H1 (cell line): ENCODE measurements at regions of chr5 and their contacts with region 1.

Region 1: GRCh38 chr5:140564196-140565023 is at the starts of genes APBB3 and SLC35A4:
- DNase-seq: peak; percentile 84 to 89
- H3K4me3 ChIP-seq: peak within 1 kb of the TSS; percentile 90 to 99 (median 95)
- H3K27ac ChIP-seq: peak within 1 kb of the TSS; percentile 65
- H3K4me1 ChIP-seq: peaks cover 0 to 11% (median 4%) of the 10 kb centered on the region in 4 experiments; a peak in 5 of 7 replicates
- H3K27me3 ChIP-seq: no peaks in the 10 kb centered on the region; a peak in 1 of 7 replicates
- CTCF ChIP-seq: no peak
- EP300 ChIP-seq: no peak
- POLR2A ChIP-seq: peak in 1 of 2 experiments; percentile 48; a peak in 2 of 3 replicates
- RAD21 ChIP-seq: peak in 1 of 2 experiments; percentile 7; a peak in 1 of 4 replicates
- total RNA-seq, gene APBB3: 12.0 and 16.0 TPM in 2 replicates
- total RNA-seq, gene SLC35A4: 78.6 and 81.9 TPM in 2 replicates

Region 2: GRCh38 chr5:140547508-140548299 is 16.7 kb before region 1 on chr5 and contains the start of gene EIF4EBP3:
- CTCF ChIA-PET with region 1: interaction called, 19 read pairs
- POLR2A ChIA-PET with region 1: interaction called, 191 read pairs
- DNase-seq: peak; percentile 91 to 95
- H3K4me3 ChIP-seq: peak within 1 kb of the TSS; percentile 34 to 66 (median 44)
- H3K27ac ChIP-seq: peak within 1 kb of the TSS; percentile 73
- H3K4me1 ChIP-seq: peaks cover 0 to 18% (median 6%) of the 10 kb centered on the region in 4 experiments; a peak in 4 of 7 replicates
- H3K27me3 ChIP-seq: no peaks in the 10 kb centered on the region
- CTCF ChIP-seq: peak; percentile 40 to 73 (median 61)
- EP300 ChIP-seq: no peak
- POLR2A ChIP-seq: peak; percentile 72 to 83
- RAD21 ChIP-seq: peak; percentile 35 to 43
- total RNA-seq, gene EIF4EBP3: 8.9 and 11.7 TPM in 2 replicates

Region 3: DNA sequence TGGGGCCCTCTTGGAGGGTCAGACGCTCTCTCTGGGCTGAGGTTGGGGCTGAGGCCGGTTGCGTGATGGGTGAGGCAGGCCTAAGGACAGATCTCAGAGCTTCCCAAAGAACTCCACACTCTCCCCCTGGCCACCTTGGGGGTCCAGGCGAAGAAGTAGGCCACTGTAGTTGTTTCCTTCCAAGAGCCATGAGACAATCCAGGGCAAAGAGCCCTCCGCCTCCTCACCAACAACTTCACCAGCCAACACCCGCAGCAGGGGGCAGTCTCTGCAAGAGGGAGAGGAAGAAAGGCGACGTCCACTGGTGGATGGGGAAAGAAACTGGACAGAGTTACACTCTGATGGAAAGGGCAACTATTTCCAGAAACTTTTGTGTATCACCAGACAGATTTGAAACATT is 10.9 kb after region 1 on chr5:
- CTCF ChIA-PET with region 1: interaction called, 20 read pairs
- POLR2A ChIA-PET with region 1: interaction called, 3 read pairs
- DNase-seq: no peak
- H3K4me3 ChIP-seq: no peak overlapping the region
- H3K27ac ChIP-seq: no peak overlapping the region
- H3K4me1 ChIP-seq: no peaks in the 10 kb centered on the region
- H3K27me3 ChIP-seq: no peaks in the 10 kb centered on the region
- CTCF ChIP-seq: peak; percentile 44 to 55 (median 50); a peak in 3 of 4 replicates
- EP300 ChIP-seq: no peak
- POLR2A ChIP-seq: no peak
- RAD21 ChIP-seq: peak; percentile 63 to 69